Common myeloid progenitor, CD34-positive (primary cell): ENCODE measurements at regions of chr16 and their contacts with region 1.

Region 1: GRCh38 chr16:96935-97381 is 18.9 kb downstream of the MPG start:
- DNase-seq: peak; percentile 92 to 96 (median 94)
- H3K4me3 ChIP-seq: no peak overlapping the region
- H3K27ac ChIP-seq: no peak overlapping the region
- H3K4me1 ChIP-seq: peaks cover 0 to 16% (median 3%) of the 10 kb centered on the region in 4 experiments
- H3K27me3 ChIP-seq: no peaks in the 10 kb centered on the region

Region 2: DNA sequence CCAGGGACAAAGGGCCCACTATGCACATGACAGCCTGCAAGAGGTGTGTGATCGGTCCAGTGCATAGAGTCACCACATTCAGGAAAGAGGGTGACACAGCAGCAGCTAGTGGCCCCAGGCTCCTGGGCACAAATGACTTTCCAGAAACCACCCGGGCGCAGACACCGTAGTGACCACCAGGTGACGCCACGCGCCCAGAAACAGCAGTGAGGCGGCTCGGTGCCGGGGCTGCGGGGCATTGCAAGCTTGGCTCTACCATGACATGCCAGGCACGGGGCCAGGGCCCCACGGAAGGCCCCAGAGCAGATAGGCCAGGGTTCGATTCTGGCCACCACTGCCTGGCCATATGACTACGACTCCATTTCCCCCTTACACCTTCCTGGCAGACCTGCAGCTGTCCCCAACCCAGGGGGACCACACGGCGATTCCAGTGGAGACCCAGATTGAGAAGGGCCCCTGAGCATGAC is 31.3 kb before region 1 on chr16:
- CTCF ChIA-PET with region 1: interaction called, 643 read pairs
- POLR2A ChIA-PET with region 1: interaction called, 12 read pairs
- DNase-seq: peak; percentile 77 to 87 (median 83)
- H3K4me3 ChIP-seq: no peak overlapping the region
- H3K27ac ChIP-seq: no peak overlapping the region
- H3K4me1 ChIP-seq: peaks cover 0 to 10% (median 7%) of the 10 kb centered on the region in 4 experiments
- H3K27me3 ChIP-seq: no peaks in the 10 kb centered on the region

Region 3: GRCh38 chr16:77807-78443 is 19.0 kb before region 1 on chr16 and contains the start of gene MPG:
- CTCF ChIA-PET with region 1: interaction called, 643 read pairs
- POLR2A ChIA-PET with region 1: no interaction called
- DNase-seq: peak; percentile 48 to 56 (median 55)
- H3K4me3 ChIP-seq: peak within 1 kb of the TSS; percentile 62 to 89 (median 73)
- H3K27ac ChIP-seq: peak within 1 kb of the TSS in 1 of 2 experiments; percentile 66
- H3K4me1 ChIP-seq: peaks cover 3 to 72% (median 67%) of the 10 kb centered on the region in 4 experiments
- H3K27me3 ChIP-seq: peaks cover 0 to 7% (median 2%) of the 10 kb centered on the region in 5 experiments

Region 4: DNA sequence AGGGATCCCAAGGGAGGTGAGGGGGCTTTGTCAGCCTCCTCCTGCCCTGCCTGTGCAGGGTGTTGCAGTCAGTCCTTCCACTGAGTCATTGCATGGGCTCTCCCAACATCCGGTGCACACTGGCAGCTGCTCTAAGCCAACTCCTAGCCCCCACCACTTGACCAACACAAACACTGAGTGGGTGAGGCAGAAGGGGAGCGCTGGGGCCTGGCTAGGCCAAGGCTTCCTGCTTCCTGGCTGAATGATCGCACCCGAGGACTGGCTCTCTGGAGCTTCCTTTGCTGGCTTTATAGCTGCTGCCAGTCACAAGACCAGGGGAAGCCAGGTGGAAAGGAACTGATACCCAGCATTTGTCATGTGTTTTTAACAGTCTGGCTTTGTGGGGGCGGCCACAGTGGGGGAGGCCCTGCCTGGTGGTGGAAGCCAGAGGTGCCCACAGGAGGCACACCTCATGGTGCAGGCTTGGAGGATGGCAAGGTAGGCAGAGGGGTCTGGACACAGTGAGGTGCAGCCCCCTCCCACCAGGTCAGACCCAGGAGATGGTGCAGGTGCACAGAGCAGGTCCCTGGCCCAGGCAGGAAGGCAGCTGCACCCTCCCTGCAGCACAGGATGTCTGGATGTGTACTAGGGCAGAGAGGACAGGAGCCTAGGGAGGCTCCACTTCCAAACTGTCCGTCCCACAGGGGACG is 12.1 kb before region 1 on chr16:
- CTCF ChIA-PET with region 1: interaction called, 643 read pairs
- POLR2A ChIA-PET with region 1: interaction called, 3 read pairs
- DNase-seq: peak; percentile 71 to 96 (median 93)
- H3K4me3 ChIP-seq: peak overlapping the region in 3 of 7 experiments; percentile 1 to 46 (median 7)
- H3K27ac ChIP-seq: peak overlapping the region in 1 of 2 experiments; percentile 68
- H3K4me1 ChIP-seq: peaks cover 0 to 54% (median 48%) of the 10 kb centered on the region in 4 experiments
- H3K27me3 ChIP-seq: no peaks in the 10 kb centered on the region

Region 5: GRCh38 chr16:117379-118365 is 20.7 kb after region 1 on chr16:
- CTCF ChIA-PET with region 1: interaction called, 12 read pairs
- POLR2A ChIA-PET with region 1: no interaction called
- DNase-seq: peak; percentile 72 to 77 (median 73)
- H3K4me3 ChIP-seq: no peak overlapping the region
- H3K27ac ChIP-seq: no peak overlapping the region
- H3K4me1 ChIP-seq: peaks cover 0 to 16% (median 12%) of the 10 kb centered on the region in 4 experiments
- H3K27me3 ChIP-seq: no peaks in the 10 kb centered on the region

Region 6: DNA sequence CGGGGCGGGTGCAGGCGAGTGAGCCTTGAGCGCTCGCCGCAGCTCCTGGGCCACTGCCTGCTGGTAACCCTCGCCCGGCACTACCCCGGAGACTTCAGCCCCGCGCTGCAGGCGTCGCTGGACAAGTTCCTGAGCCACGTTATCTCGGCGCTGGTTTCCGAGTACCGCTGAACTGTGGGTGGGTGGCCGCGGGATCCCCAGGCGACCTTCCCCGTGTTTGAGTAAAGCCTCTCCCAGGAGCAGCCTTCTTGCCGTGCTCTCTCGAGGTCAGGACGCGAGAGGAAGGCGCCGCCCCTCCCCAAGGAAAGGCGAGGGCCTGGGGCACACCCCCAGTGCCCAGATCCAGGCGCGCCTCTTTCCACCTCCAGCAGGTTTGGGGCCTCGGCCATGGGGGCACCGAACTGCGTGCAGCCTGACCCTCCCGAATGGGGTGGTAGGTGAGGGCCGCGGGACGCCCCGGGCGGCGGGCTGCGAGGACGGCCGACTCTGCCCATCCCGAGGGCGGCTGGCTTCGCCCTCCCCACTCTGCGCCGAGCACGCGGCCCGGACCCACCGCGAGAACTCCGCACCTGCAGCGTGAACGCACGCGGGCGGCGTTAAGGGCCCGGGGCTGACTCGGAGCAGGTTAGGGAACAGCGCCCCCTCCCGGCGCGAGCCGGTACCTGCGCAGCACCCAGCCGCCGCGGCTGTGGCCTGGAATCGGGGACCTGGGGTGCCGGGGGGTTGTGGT is 84.1 kb after region 1 on chr16:
- CTCF ChIA-PET with region 1: interaction called, 11 read pairs
- POLR2A ChIA-PET with region 1: no interaction called
- DNase-seq: peak; percentile 75 to 88 (median 86)
- H3K4me3 ChIP-seq: peak overlapping the region in 4 of 7 experiments; percentile 28 to 63 (median 48)
- H3K27ac ChIP-seq: no peak overlapping the region
- H3K4me1 ChIP-seq: peaks cover 0 to 20% (median 15%) of the 10 kb centered on the region in 4 experiments
- H3K27me3 ChIP-seq: peaks cover 0 to 36% (median 11%) of the 10 kb centered on the region in 5 experiments

Region 7: DNA sequence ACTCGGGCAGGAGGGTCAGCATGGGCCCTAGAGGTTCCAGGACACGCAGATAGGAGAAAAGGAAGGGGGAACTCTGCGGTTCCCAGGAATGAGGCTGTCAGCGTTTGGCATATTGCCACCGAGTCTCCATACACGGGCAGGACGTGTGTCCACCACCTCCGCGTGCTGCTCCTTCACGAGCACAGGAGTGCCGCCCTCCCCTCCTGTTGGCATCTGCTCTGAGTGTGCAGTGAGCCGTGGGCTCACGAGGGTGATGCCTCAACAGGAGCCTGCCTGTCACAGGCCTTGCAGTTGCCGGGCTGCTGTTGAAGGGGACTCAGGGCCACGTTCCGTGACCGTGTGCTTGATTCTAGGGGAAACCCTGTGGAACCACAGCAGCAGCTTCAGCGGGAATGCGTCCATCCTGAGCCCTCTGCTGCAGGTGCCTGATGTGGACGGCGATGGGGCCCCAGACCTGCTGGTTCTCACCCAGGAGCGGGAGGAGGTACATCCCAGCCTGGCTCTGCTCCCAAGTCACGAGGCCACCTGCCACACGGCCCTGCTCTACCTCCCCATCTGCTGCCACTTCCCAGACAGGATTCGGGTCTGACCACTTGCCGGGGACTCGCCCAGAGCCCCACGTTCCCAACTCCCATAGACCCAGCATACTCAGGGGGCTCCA is 164.2 kb after region 1 on chr16:
- CTCF ChIA-PET with region 1: no interaction called
- POLR2A ChIA-PET with region 1: no interaction called
- DNase-seq: no peak
- H3K4me3 ChIP-seq: no peak overlapping the region
- H3K27ac ChIP-seq: no peak overlapping the region
- H3K4me1 ChIP-seq: peaks cover 0 to 6% (median 3%) of the 10 kb centered on the region in 4 experiments
- H3K27me3 ChIP-seq: no peaks in the 10 kb centered on the region